ENCODE measurements at regions of chr2 and their contacts with region 1.

Region 1: DNA sequence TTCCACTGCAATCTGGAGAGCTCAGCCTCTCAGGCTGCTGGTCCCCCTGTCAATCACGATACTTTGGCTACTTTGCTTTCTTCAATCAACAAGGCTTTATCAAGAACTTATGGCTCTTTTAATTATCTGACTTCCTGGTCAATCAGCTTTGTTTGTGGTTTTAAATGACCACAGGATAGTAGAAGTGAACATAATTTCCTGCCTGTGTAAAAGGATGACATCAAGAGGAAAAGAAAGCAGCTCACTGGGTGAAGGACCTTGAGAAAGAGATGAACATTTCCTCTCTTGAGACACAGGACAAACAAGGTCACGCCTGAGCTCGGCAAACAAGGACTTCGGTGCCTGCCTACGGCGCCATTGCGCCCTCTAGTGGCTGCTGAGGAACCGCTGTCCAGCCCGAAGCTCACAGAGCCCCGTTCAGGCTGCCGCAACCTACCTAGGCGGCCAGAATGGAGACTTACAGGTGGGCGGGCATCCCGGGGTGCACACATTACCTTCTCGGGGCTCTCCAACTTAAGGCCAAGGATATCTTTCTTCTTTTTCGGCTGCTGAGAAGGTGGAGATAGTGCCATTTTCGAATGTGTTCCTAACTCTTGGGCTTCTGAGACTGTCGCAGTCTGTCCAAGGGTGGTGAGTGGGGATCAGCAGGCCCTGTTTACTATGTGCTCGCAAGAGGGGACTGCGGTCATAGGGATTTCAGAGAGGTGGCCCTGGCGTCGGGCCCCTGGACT is 54.0 kb downstream of the IL1RL2 start:
- DNase-seq: peak; percentile 87
- CTCF ChIP-seq: peak; percentile 97

Region 2: DNA sequence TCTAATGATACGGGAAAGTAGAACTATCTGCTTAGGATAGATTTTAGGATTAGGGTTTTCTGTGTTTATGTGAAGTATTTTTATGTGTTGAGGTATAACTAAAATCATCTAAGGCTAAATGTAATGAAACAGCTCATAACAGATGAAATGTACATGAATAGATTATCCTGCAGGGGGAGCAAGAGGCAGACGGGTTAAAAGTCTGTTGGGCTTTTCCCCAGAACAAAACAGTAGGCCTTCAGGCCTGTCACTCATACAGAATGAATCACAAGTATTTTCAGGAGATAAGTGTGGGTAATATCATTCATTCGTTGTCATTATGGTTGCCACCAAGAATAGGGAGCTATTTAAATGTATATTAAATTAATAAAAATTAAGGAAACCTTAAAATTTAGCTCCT is 356.9 kb before region 1 on chr2:
- CTCF ChIA-PET with region 1: interaction called, 50 read pairs
- POLR2A ChIA-PET with region 1: interaction called, 3 read pairs
- DNase-seq: peak; percentile 39
- CTCF ChIP-seq: peak; percentile 37

Region 3: DNA sequence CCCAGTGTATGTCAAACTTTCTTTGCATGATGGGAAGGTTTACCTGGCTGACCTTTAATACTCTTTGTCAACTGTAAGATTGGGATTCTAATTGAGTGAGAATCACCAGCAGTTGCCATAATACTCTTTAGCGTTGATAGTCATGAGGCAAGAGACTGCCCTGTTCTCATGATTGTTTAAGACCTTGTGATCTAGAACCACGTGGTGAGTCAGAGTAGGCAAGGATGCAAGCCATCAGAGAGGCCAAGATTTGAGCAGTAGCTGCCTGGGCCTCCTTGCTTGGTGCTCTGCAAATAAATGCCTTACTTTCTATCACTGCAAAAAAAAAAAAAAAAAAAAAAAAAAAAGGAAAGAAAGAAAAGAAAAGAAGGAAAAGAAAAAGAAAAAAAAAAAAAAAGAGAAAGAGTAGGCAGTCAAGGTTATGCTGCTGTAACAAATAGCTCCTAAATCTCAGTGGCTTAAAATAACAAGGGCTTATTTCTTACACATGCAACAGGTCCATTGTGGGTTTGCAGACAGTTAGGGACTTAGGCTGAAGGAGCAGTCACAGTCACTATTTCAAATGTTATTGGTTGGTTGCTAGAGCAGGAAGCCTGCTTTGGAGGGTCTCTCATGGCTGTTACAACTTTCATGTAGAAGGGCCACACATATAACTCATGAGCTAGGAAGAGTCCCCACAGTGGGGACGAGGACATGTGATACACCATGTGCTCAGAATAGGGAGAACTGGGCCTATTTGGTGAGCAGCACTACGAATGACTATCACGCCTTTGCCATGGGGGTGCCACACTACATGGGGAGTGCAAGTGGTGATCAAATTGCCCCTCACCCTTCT is 227.4 kb before region 1 on chr2:
- CTCF ChIA-PET with region 1: interaction called, 82 read pairs
- POLR2A ChIA-PET with region 1: no interaction called
- DNase-seq: no peak
- CTCF ChIP-seq: no peak

Region 4: DNA sequence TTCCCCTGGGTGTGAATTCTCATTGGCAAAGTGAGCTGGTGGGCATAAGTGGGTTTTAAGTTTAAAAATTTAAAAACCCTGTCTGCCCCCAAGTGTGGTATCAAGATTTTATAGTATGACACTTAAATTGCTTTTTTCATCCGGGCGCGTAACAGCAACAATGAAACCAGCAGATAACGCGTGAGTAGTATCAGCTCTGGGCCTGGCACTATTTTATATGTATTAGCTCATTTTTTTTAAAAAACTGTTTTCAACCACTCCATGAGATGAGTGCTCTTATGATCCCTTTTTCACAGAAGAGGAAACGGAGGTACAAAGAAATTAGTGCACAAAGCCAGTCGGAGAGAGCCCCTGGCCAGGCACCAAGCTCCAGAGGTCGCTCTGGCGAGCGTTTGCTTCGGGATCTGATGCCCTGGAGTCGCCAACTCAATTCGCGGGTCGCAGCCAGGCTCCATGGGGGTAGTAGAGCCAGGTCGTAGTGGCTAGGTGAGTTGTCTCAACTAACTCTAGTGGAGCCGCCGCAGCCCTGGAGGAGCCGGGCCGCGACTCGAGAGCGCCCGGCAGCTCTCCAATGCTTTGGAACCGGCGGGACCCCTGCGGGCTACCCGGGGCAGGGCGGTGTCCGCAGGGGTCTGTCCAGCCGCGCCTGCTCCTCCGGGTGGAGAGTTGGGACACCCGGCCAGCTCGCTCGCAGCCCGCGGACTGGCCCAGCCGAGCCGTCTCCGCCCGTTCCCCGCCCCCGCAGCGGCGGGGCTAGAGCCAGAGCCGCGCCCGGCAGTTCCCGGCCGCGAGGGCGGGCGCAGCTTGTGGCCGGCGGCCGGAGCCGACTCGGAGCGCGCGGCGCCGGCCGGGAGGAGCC is 98.6 kb before region 1 on chr2 and contains the start of gene IL1R1:
- CTCF ChIA-PET with region 1: interaction called, 10 read pairs
- POLR2A ChIA-PET with region 1: no interaction called
- DNase-seq: peak; percentile 36
- CTCF ChIP-seq: no peak

Region 5: GRCh38 chr2:102251042-102251848 is 10.4 kb after region 1 on chr2:
- CTCF ChIA-PET with region 1: interaction called, 133 read pairs
- POLR2A ChIA-PET with region 1: no interaction called
- DNase-seq: peak; percentile 72
- CTCF ChIP-seq: peak; percentile 75

Region 6: GRCh38 chr2:102436323-102436722 is 195.5 kb after region 1 on chr2:
- CTCF ChIA-PET with region 1: interaction called, 13 read pairs
- POLR2A ChIA-PET with region 1: no interaction called
- DNase-seq: no peak
- CTCF ChIP-seq: no peak

Measured in GM10248 (cell line).